Left cardiac atrium (tissue), 4 donors: ENCODE measurements at regions of chr11 and their contacts with region 1.

Region 1: DNA sequence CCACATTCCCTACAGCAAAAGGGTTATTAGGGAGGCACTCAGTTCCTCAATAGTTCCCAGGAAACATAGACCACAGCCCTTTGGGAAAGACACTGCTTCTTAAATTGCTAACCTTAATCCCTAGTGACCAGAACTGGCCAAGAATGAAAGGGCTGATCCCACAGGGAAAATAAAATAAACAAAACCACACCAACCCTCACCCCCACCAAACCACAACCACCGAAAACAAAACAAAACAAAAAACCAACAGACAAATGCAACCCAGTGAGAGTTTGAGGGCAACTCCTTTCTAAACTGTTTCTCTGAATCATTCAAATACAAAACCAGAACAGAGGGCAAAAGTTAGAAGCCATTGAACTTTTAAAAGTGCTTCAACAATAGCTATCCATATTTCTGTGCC is 57.2 kb downstream of the NAV2 start:
- DNase-seq: no peak
- ATAC-seq: no peak

Region 2: DNA sequence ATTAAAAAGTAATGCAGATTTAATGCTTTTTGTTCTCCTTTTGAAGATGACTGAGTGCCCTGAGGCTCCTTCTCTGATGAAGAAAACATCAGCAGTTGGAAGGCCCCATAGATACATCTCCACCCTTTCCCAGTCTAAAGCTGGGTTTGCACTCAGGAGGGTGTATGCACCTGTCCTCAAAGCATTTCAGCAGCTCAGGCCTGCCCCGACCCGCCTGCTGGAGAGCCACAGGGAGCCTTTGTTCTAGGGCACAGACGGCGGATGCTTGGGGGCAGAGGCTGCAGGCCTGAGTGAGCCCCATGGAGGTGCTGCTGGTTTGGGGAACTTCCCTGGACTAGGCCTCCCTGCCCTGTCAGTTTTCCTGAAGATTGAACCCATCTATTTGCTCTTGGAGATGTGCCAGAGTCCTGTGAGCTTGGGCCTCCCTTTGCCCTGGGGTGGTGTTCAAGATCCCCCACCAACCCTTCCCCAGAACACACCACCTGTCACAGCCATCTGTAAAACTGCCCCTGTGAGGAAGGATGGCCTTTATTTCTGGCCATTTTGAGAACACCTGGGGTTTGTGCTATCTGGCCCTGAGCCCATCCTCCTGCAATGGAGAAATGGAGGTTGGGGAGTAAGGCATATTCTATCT is 102.8 kb after region 1 on chr11:
- intact Hi-C with region 1: loop called in 1 of 2 experiments (anchors 10 kb)
- DNase-seq: no peak
- ATAC-seq: no peak